PC-3 (cell line): ENCODE measurements at regions of chr6 and their contacts with region 1.

Region 1: GRCh38 chr6:27672113-27672799 is 199.4 kb upstream of the ZNF184 start:
- DNase-seq: peak; percentile 90
- ATAC-seq: peak; percentile 64
- H3K4me3 ChIP-seq: peak overlapping the region; percentile 71
- H3K27ac ChIP-seq: peak overlapping the region; percentile 22
- H3K4me1 ChIP-seq: peaks cover 15% of the 10 kb centered on the region
- H3K27me3 ChIP-seq: no peaks in the 10 kb centered on the region
- CTCF ChIP-seq: no peak

Region 2: DNA sequence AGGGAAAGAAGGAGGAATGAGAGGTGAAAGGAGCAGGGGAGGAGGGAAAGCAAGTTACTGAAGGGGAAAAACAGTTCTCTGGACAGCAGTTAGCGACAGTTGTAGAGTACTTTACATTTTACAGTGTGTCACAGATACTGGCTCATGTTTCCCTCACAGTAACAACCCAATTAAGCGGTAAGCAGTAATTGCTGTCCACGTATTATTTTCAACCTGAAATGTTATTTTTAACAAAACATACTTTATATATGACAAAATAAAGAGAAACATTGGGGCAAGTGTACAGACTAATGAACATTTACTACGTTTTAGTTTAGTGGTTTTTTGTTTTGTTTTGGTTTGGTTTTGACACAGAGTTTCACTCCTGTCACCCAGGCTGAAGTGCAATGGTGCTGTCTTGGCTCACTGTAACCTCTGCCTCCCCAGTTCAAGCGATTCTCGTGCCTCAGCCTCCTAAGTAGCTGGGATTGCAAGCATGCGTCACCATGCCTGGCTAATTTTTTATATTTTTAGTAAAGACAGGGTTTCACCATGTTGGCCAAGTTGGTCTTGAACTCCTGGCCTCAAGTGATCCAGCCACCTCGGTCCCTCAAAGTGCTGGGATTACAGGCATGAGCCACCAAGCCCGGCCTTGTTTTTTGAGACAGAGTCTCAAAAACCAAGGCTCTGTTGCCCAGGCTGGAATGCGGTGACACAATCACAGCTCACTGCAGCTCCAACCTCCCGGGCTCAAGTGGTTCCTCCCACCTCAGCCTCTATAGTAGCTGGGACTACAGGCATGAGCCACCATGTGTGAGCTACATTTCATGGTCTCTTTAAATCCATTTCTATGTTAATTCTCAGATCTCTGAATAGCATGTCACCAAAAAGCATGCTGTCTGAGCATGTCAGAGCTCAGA is 1329.9 kb before region 1 on chr6:
- CTCF ChIA-PET with region 1: interaction called, 10 read pairs
- POLR2A ChIA-PET with region 1: no interaction called
- intact Hi-C with region 1: no loop called
- DNase-seq: peak; percentile 35
- ATAC-seq: no peak
- H3K4me3 ChIP-seq: peak overlapping the region; percentile 61
- H3K27ac ChIP-seq: no peak overlapping the region
- H3K4me1 ChIP-seq: peaks cover 24% of the 10 kb centered on the region
- H3K27me3 ChIP-seq: no peaks in the 10 kb centered on the region
- CTCF ChIP-seq: no peak

Region 3: GRCh38 chr6:27168586-27169443 is 503.4 kb before region 1 on chr6:
- CTCF ChIA-PET with region 1: no interaction called
- POLR2A ChIA-PET with region 1: no interaction called
- intact Hi-C with region 1: loop called (anchors 5 kb)
- DNase-seq: peak; percentile 87
- ATAC-seq: peak; percentile 94
- H3K4me3 ChIP-seq: peak overlapping the region; percentile 57
- H3K27ac ChIP-seq: peak overlapping the region; percentile 96
- H3K4me1 ChIP-seq: peaks cover 24% of the 10 kb centered on the region
- H3K27me3 ChIP-seq: no peaks in the 10 kb centered on the region
- CTCF ChIP-seq: no peak

Region 4: DNA sequence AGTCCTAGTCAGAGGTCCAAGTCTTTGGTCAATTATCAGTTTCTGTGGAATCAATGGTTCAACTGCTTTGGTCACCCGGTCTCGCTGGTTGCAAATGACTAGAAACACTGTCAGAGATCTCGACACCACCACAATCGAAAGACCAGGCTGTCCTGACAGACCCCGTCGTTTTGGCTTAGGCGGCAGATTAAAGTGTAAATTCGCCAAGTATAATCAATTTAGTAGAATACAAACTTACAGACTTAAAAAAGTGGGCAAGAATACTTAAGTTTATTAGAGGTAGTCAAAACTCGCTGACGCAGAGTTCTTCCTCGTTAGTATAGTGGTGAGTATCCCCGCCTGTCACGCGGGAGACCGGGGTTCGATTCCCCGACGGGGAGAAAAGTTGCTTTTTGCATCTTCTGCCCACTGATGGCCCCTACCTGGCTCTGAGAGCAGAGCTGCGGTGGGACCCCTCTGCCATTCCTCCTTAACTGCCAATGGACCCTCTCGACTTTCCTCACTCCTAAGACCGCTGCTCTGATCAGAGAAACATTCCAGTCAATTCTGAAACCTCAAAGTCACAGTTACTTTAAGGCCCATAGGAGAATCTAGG is 168.7 kb before region 1 on chr6:
- CTCF ChIA-PET with region 1: no interaction called
- POLR2A ChIA-PET with region 1: no interaction called
- intact Hi-C with region 1: loop called (anchors 5 kb)
- DNase-seq: peak; percentile 91
- ATAC-seq: peak; percentile 25
- H3K4me3 ChIP-seq: peak overlapping the region; percentile 86
- H3K27ac ChIP-seq: peak overlapping the region; percentile 11; the same call in 1 of the 2 replicates
- H3K4me1 ChIP-seq: peaks cover 8% of the 10 kb centered on the region; the same call in 1 of the 2 replicates
- H3K27me3 ChIP-seq: no peaks in the 10 kb centered on the region
- CTCF ChIP-seq: no peak

Region 5: GRCh38 chr6:27617700-27618689 is 54.3 kb before region 1 on chr6:
- CTCF ChIA-PET with region 1: no interaction called
- POLR2A ChIA-PET with region 1: no interaction called
- intact Hi-C with region 1: loop called (anchors 5 kb)
- DNase-seq: peak; percentile 73
- ATAC-seq: peak; percentile 91
- H3K4me3 ChIP-seq: peak overlapping the region; percentile 84
- H3K27ac ChIP-seq: no peak overlapping the region
- H3K4me1 ChIP-seq: peaks cover 8% of the 10 kb centered on the region; the same call in 1 of the 2 replicates
- H3K27me3 ChIP-seq: no peaks in the 10 kb centered on the region
- CTCF ChIP-seq: peak; percentile 42

Region 6: GRCh38 chr6:27753668-27754407 is 81.6 kb after region 1 on chr6:
- CTCF ChIA-PET with region 1: interaction called, 4 read pairs
- POLR2A ChIA-PET with region 1: interaction called, 3 read pairs
- intact Hi-C with region 1: loop called (anchors 1 kb)
- DNase-seq: peak; percentile 92
- ATAC-seq: peak; percentile 70
- H3K4me3 ChIP-seq: peak overlapping the region; percentile 82
- H3K27ac ChIP-seq: no peak overlapping the region
- H3K4me1 ChIP-seq: peaks cover 15% of the 10 kb centered on the region
- H3K27me3 ChIP-seq: no peaks in the 10 kb centered on the region
- CTCF ChIP-seq: 0 out of 2 replicates have a peak, but pooled peaks have one; percentile 11